CD8-positive, alpha-beta memory T cell (primary cell): ENCODE measurements at regions of chr12 and their contacts with region 1.

Region 1: GRCh38 chr12:39287409-39287808 is 155.5 kb downstream of the KIF21A start:
- DNase-seq: no peak
- H3K4me3 ChIP-seq: no peak overlapping the region
- H3K4me3 Mint-ChIP-seq: no peak overlapping the region
- H3K27ac ChIP-seq: no peak overlapping the region
- H3K27ac Mint-ChIP-seq: no peak overlapping the region
- H3K4me1 ChIP-seq: no peaks in the 10 kb centered on the region
- H3K4me1 Mint-ChIP-seq: peaks cover 0 to 5% (median 4%) of the 10 kb centered on the region in 3 donors
- H3K27me3 ChIP-seq: no peaks in the 10 kb centered on the region
- H3K27me3 Mint-ChIP-seq: peaks cover 0 to 3% of the 10 kb centered on the region in 2 donors

Region 2: GRCh38 chr12:39272871-39273770 is 14.3 kb before region 1 on chr12:
- CTCF ChIA-PET with region 1: interaction called, 12 read pairs
- POLR2A ChIA-PET with region 1: no interaction called
- DNase-seq: peak in 1 of 5 donors; percentile 10
- H3K4me3 ChIP-seq: no peak overlapping the region
- H3K4me3 Mint-ChIP-seq: no peak overlapping the region
- H3K27ac ChIP-seq: no peak overlapping the region
- H3K27ac Mint-ChIP-seq: no peak overlapping the region
- H3K4me1 ChIP-seq: no peaks in the 10 kb centered on the region
- H3K4me1 Mint-ChIP-seq: peaks cover 0 to 2% (median 0%) of the 10 kb centered on the region in 3 donors
- H3K27me3 ChIP-seq: no peaks in the 10 kb centered on the region
- H3K27me3 Mint-ChIP-seq: peaks cover 5 to 19% of the 10 kb centered on the region in 2 donors

Region 3: DNA sequence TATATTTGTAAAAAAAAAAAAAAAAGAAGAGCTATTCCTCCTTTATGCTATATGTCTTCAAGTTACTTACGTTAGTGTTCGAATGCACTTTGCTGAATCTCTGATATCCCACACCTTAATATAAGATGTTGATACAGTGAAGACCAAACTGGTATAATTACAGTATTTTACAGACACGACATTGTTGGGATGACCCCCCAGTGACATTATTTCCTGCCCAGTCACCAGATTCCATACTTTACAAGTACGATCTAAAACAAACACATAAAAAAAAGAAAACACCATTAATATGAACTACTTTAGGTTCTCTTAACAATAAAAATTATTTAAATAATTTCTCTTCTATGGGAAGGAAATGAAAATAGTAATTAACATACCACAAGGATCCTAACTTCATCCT is 22.1 kb after region 1 on chr12:
- CTCF ChIA-PET with region 1: no interaction called
- POLR2A ChIA-PET with region 1: no interaction called
- DNase-seq: no peak
- H3K4me3 ChIP-seq: no peak overlapping the region
- H3K4me3 Mint-ChIP-seq: no peak overlapping the region
- H3K27ac ChIP-seq: no peak overlapping the region
- H3K27ac Mint-ChIP-seq: no peak overlapping the region
- H3K4me1 ChIP-seq: no peaks in the 10 kb centered on the region
- H3K4me1 Mint-ChIP-seq: no peaks in the 10 kb centered on the region
- H3K27me3 ChIP-seq: no peaks in the 10 kb centered on the region
- H3K27me3 Mint-ChIP-seq: no peaks in the 10 kb centered on the region

Region 4: DNA sequence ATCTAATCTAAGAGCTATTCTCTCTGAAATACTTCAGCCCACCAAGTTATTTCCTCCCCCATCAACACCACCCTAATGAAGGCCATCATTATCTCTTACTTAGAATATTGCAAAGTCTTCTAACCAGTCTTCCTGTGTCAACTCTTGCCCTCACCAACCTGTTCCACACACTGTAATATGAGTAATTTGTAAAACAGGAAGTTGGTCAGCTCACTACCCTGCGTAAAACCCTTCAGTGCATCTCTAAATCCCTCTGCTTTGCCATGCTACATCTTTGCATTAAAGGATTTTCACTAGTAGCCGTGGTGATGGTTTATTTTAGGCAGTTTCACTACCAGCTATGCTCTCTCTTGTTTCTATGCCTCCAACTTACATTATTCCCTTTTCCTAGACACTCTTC is 85.5 kb after region 1 on chr12:
- CTCF ChIA-PET with region 1: no interaction called
- POLR2A ChIA-PET with region 1: no interaction called
- DNase-seq: peak in 1 of 5 donors; percentile 28
- H3K4me3 ChIP-seq: no peak overlapping the region
- H3K4me3 Mint-ChIP-seq: peak overlapping the region in 6 of 7 donors; percentile 16 to 64 (median 44)
- H3K27ac ChIP-seq: no peak overlapping the region
- H3K27ac Mint-ChIP-seq: peak overlapping the region; percentile 4 to 92 (median 65)
- H3K4me1 ChIP-seq: peaks cover 8% of the 10 kb centered on the region
- H3K4me1 Mint-ChIP-seq: peaks cover 35 to 63% (median 49%) of the 10 kb centered on the region in 3 donors
- H3K27me3 ChIP-seq: no peaks in the 10 kb centered on the region
- H3K27me3 Mint-ChIP-seq: no peaks in the 10 kb centered on the region